T-cell (primary cell): ENCODE measurements at regions of chr18 and their contacts with region 1.

Region 1: DNA sequence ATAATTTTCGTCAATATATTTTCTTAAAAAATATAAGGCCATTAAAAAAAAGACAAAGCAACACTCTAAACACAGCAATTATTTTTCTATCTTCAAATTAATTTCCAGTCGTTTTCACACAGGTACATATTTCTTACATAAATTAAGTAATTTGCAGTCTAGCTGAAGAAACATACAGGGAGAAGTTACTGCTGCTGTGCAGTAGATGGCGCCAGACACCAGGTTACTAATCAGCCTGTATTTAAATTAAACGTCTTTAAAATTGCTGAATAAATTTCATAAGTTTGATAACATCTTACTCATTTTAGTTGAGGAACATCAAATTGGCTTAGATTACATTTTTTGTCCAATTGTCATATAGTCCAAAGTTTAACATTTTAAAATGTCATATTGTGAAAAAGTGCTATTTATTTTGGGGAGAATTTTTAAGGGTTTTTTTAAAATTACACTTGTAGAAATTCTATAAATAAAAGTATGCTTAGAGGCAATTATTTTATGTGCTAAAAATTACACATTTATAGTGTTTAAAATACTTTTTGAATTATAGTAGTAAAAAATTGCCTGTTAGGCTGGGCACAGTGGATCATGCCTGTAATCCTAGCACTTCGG is 88.4 kb downstream of the PMAIP1 start:
- DNase-seq: peak in 28 of 35 experiments; percentile 6 to 66 (median 28)
- ATAC-seq: peak in 1 of 4 experiments; percentile 36
- H3K4me3 ChIP-seq: no peak overlapping the region
- H3K4me3 Mint-ChIP-seq: no peak overlapping the region
- H3K27ac ChIP-seq: no peak overlapping the region
- H3K27ac Mint-ChIP-seq: no peak overlapping the region
- H3K4me1 ChIP-seq: no peaks in the 10 kb centered on the region
- H3K4me1 Mint-ChIP-seq: no peaks in the 10 kb centered on the region
- H3K27me3 ChIP-seq: no peaks in the 10 kb centered on the region
- H3K27me3 Mint-ChIP-seq: peaks cover 18 to 19% of the 10 kb centered on the region in 2 donors

Region 2: DNA sequence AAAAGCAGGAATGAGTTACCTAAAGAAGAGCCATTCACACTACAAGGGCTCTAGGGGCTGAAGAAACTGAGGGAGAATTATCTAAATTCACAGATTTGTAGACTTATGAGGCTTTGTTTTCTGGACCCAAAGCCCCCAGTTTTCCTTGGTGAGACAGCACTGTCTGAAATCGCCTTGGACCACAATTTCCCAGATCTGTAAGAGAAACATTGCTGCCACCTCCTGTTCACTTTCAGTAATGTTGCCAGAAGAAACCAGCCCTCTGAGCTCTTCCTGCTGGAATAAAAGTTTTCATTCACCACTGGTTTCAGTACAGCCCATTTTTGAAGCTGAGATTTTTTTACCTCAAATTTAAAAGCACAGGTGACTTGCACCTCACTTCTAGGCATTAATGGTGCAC is 1514.3 kb after region 1 on chr18:
- CTCF ChIA-PET with region 1: interaction called, 5 to 12 read pairs
- POLR2A ChIA-PET with region 1: no interaction called
- DNase-seq: peak in 1 of 35 experiments; percentile 11
- ATAC-seq: no peak
- H3K4me3 ChIP-seq: no peak overlapping the region
- H3K4me3 Mint-ChIP-seq: no peak overlapping the region
- H3K27ac ChIP-seq: no peak overlapping the region
- H3K27ac Mint-ChIP-seq: no peak overlapping the region
- H3K4me1 ChIP-seq: no peaks in the 10 kb centered on the region
- H3K4me1 Mint-ChIP-seq: no peaks in the 10 kb centered on the region
- H3K27me3 ChIP-seq: peaks cover 0 to 3% of the 10 kb centered on the region in 2 experiments
- H3K27me3 Mint-ChIP-seq: peaks cover 10 to 13% of the 10 kb centered on the region in 2 donors